GM18951 (cell line): ENCODE measurements at regions of chr5 and their contacts with region 1.

Region 1: GRCh38 chr5:90020575-90021539 is 388.7 kb downstream of the CETN3 start:
- POLR2A ChIP-seq: no peak

Region 2: GRCh38 chr5:88729084-88729828 is 1291.6 kb before region 1 on chr5:
- in situ Hi-C with region 1: loop called (anchors 25 kb)
- POLR2A ChIP-seq: no peak